Prostate gland (tissue), 2 donors: ENCODE measurements at regions of chr19 and their contacts with region 1.

Region 1: GRCh38 chr19:12766051-12766521 is 9.3 kb downstream of the HOOK2 start:
- DNase-seq: peak; percentile 60
- H3K4me3 ChIP-seq: peak overlapping the region; percentile 12 to 13
- H3K27ac ChIP-seq: no peak overlapping the region
- H3K4me1 ChIP-seq: no peaks in the 10 kb centered on the region
- H3K27me3 ChIP-seq: no peaks in the 10 kb centered on the region
- CTCF ChIP-seq: peak; percentile 52 to 79 (median 70)
- POLR2A ChIP-seq: no peak

Region 2: GRCh38 chr19:12837225-12837624 is 71.1 kb after region 1 on chr19:
- intact Hi-C with region 1: loop called (anchors 2 kb)
- DNase-seq: no peak
- H3K4me3 ChIP-seq: no peak overlapping the region
- H3K27ac ChIP-seq: no peak overlapping the region
- H3K4me1 ChIP-seq: peaks cover 6% of the 10 kb centered on the region
- H3K27me3 ChIP-seq: peaks cover 32% of the 10 kb centered on the region
- CTCF ChIP-seq: no peak
- POLR2A ChIP-seq: no peak

Region 3: DNA sequence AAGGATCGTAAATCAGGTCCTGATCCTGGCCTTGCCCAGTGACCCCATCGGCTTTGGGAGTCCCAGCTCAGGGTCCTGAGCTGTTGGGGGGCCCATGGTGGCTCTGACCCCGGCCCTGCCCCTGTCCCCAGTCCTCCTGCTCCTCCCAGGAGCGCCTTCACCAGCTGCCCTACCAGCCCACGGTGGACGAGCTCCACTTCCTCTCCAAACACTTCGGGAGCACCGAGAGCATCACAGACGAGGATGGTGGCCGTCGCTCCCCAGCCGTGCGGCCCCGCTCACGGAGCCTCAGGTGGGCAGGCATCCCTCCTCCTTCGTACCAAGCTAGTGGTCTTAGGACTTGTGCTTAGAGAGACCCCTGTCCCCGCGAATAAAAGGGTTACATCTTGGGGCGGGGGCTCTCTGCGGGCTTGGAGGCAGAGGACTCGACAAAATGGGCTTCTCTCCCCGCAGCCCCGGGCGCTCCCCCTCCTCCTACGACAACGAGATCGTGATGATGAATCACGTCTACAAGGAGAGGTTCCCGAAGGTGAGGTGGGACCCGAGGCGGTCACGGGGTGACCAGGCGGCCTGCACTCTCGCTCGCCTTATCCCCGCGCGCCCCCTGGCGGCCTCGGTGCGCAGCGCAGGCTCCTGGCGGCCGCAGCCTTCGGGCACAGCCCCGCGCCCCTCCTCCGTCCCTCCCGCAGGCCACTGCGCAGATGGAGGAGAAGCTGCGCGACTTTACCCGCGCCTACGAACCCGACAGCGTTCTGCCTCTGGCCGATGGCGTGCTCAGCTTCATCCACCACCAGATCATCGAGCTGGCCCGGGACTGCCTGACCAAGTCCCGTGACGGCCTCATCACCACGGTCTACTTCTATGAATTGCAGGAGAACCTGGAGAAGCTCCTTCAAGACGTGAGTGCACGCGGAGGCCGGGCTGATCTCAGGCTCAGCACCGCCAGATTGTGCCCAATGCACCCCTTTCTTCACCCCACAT is 81.4 kb after region 1 on chr19:
- intact Hi-C with region 1: loop called (anchors 5 kb)
- DNase-seq: peak; percentile 75
- H3K4me3 ChIP-seq: no peak overlapping the region
- H3K27ac ChIP-seq: no peak overlapping the region
- H3K4me1 ChIP-seq: no peaks in the 10 kb centered on the region
- H3K27me3 ChIP-seq: peaks cover 3% of the 10 kb centered on the region
- CTCF ChIP-seq: peak; percentile 95 to 99 (median 97)
- POLR2A ChIP-seq: no peak